ENCODE measurements at regions of chr12 and their contacts with region 1.

Region 1: DNA sequence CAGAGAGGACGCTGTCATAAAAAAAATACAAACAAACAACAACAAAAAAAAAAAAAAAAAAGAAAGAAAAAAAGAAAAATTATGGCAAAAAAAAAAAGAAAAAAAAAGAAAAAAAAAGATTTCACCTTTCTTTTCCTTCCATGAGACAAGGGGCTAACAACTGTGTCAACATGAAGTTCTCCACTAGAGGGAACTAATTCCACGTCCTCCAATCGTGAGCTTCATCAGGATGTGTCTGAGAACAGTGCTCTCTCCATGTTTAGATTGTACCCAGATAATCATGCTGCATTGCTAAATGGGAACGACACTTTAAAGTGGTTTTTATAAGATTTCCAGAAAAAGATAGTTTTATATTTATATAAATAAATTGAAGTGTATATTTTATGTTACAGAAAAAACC is 96.2 kb upstream of the PTPRB start:
- DNase-seq: peak; percentile 56 to 69
- H3K4me3 ChIP-seq: no peak overlapping the region
- H3K4me3 Mint-ChIP-seq: no peak overlapping the region
- H3K27ac Mint-ChIP-seq: no peak overlapping the region
- H3K4me1 ChIP-seq: no peaks in the 10 kb centered on the region
- H3K4me1 Mint-ChIP-seq: no peaks in the 10 kb centered on the region
- H3K27me3 ChIP-seq: no peaks in the 10 kb centered on the region
- H3K27me3 Mint-ChIP-seq: no peaks in the 10 kb centered on the region
- CTCF ChIP-seq: peak; percentile 61 to 80

Region 2: DNA sequence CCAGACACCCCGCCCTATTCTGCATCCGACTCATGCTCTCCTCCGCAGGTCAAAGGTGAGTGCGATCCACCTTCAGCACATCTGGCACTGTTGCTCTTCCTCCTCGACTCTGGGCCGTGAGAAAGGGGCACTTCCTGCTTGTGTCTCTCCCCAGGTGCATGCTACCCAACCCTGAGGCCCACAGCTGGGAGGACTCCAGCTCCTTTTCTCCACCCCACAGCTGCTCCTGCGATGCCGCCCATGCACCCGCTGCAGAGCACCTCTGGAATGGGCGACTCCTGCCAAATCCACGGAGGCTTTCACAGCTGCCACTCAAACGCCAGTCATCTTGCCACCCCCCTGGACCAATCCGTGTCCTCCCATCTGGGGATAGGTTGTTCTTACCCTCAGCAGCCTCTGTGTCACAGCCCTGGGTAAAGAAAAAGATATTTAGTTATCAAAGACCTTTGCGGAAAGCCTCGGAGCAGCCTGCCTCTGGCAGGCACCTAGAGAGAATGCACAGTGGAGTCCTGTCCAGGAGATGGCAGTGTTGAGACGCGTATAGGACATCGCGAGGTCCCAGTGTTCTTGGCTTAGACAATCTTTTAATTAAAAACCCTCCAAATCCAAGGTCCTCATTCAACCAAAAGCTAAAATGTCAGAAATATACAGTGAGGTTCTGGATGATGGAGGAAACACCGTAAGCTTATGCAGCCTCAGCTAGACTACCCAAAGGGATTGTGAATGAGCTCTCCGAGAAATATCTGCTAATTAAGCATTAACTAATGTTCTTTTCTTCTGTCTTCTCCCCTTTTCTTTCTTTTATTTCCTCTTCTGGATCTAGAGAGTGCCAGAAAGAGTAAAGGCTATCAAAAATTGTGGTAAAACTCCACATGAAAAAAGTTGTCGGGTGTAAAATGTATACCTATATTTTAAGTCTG is 854.1 kb before region 1 on chr12:
- CTCF ChIA-PET with region 1: no interaction called
- POLR2A ChIA-PET with region 1: no interaction called
- intact Hi-C with region 1: loop called (anchors 1 kb)
- DNase-seq: peak; percentile 67 to 76
- H3K4me3 ChIP-seq: peak overlapping the region; percentile 31
- H3K4me3 Mint-ChIP-seq: peak overlapping the region; percentile 68
- H3K27ac Mint-ChIP-seq: no peak overlapping the region
- H3K4me1 ChIP-seq: no peaks in the 10 kb centered on the region; the same call in 1 of the 2 replicates
- H3K4me1 Mint-ChIP-seq: peaks cover 9% of the 10 kb centered on the region
- H3K27me3 ChIP-seq: no peaks in the 10 kb centered on the region; the same call in 1 of the 2 replicates
- H3K27me3 Mint-ChIP-seq: peaks cover 25% of the 10 kb centered on the region
- CTCF ChIP-seq: peak; percentile 90 to 93

Region 3: GRCh38 chr12:70779250-70779649 is 45.9 kb after region 1 on chr12:
- CTCF ChIA-PET with region 1: no interaction called
- POLR2A ChIA-PET with region 1: no interaction called
- intact Hi-C with region 1: loop called (anchors 1 kb)
- DNase-seq: no peak
- H3K4me3 ChIP-seq: no peak overlapping the region
- H3K4me3 Mint-ChIP-seq: no peak overlapping the region
- H3K27ac Mint-ChIP-seq: no peak overlapping the region
- H3K4me1 ChIP-seq: no peaks in the 10 kb centered on the region
- H3K4me1 Mint-ChIP-seq: no peaks in the 10 kb centered on the region
- H3K27me3 ChIP-seq: no peaks in the 10 kb centered on the region
- H3K27me3 Mint-ChIP-seq: no peaks in the 10 kb centered on the region
- CTCF ChIP-seq: no peak

Region 4: DNA sequence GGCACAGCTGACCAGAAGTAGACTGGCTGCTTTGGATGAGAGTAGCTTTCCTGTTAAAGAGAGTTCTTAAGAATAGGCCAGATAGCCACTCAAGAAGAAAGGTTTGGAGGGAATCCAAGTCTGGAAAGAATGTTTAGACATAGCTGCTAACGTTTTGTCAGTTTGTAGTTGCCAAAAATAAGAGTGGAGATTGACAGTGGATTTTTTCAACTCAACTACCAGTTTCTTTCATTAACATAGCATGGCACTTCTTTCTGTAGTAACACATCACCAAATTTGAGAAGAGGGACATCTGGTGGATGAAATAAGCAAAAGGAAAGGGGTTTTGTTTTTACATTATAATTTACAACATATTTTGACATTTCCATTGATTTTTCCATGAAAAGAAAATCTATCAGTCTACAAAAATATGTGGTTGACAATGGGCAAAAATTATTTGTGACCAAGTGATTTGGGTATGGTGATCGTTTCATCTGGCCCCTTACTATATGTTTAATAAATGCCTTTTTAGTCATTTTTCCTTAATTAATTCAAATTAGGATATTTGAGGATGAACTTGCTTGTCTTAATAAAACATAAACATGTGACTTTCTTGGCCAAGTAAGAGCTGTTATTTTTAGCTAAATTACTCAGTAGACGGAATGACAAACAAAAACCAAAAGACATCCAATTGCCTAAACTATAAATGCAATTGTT is 116.0 kb after region 1 on chr12:
- CTCF ChIA-PET with region 1: interaction called, 19 read pairs
- POLR2A ChIA-PET with region 1: no interaction called
- intact Hi-C with region 1: loop called (anchors 1 kb)
- DNase-seq: peak in 1 of 2 experiments; percentile 18
- H3K4me3 ChIP-seq: no peak overlapping the region
- H3K4me3 Mint-ChIP-seq: no peak overlapping the region
- H3K27ac Mint-ChIP-seq: no peak overlapping the region
- H3K4me1 ChIP-seq: no peaks in the 10 kb centered on the region
- H3K4me1 Mint-ChIP-seq: no peaks in the 10 kb centered on the region
- H3K27me3 ChIP-seq: no peaks in the 10 kb centered on the region
- H3K27me3 Mint-ChIP-seq: peaks cover 2% of the 10 kb centered on the region
- CTCF ChIP-seq: peak; percentile 41 to 55

Region 5: DNA sequence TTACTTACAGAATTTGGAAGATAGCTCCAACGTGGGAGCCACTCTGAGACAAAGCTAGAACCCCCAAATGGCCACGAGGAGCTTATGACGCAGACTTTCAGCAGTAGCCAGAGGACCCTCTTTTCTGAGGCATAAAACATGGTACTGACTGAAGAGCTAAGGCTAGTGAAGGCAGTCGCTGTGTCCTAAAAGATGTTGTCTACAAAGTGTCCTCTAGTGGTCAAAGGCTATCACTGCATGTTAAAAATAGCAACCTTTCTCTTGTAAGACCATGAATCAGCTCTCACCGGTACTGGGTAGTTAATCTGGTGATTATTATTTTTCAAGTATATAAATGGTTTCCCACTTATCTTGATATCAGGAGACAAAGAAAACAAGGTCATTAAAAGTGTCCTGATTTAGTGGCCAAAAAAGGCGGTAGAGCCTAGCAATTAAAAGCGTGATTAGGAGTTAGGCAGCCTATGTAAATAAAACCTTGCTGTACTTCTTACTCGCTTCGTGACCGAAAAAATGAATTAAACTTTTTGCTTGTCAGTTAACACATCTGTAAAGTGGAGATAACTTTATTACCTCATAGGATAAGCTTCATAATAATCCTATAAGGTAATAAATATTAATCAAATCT is 659.2 kb after region 1 on chr12:
- CTCF ChIA-PET with region 1: no interaction called
- POLR2A ChIA-PET with region 1: no interaction called
- intact Hi-C with region 1: loop called (anchors 5 kb)
- DNase-seq: peak in 1 of 2 experiments; percentile 34
- H3K4me3 ChIP-seq: no peak overlapping the region
- H3K4me3 Mint-ChIP-seq: no peak overlapping the region
- H3K27ac Mint-ChIP-seq: no peak overlapping the region
- H3K4me1 ChIP-seq: no peaks in the 10 kb centered on the region
- H3K4me1 Mint-ChIP-seq: no peaks in the 10 kb centered on the region
- H3K27me3 ChIP-seq: no peaks in the 10 kb centered on the region
- H3K27me3 Mint-ChIP-seq: peaks cover 3% of the 10 kb centered on the region
- CTCF ChIP-seq: peak; percentile 61 to 75